ENCODE measurements at regions of chr12 and their contacts with region 1.

Region 1: GRCh38 chr12:109518820-109519665 is 41.6 kb downstream of the UBE3B start:
- DNase-seq: peak; percentile 18 to 58 (median 41)
- ATAC-seq: peak; percentile 77
- H3K4me3 ChIP-seq: no peak overlapping the region
- H3K4me3 Mint-ChIP-seq: no peak overlapping the region
- H3K27ac ChIP-seq: no peak overlapping the region
- H3K27ac Mint-ChIP-seq: peak overlapping the region in 4 of 9 donors; percentile 29 to 76 (median 45)
- H3K4me1 ChIP-seq: no peaks in the 10 kb centered on the region
- H3K4me1 Mint-ChIP-seq: peaks cover 0 to 12% (median 0%) of the 10 kb centered on the region in 7 donors
- H3K27me3 ChIP-seq: no peaks in the 10 kb centered on the region
- H3K27me3 Mint-ChIP-seq: no peaks in the 10 kb centered on the region

Region 2: DNA sequence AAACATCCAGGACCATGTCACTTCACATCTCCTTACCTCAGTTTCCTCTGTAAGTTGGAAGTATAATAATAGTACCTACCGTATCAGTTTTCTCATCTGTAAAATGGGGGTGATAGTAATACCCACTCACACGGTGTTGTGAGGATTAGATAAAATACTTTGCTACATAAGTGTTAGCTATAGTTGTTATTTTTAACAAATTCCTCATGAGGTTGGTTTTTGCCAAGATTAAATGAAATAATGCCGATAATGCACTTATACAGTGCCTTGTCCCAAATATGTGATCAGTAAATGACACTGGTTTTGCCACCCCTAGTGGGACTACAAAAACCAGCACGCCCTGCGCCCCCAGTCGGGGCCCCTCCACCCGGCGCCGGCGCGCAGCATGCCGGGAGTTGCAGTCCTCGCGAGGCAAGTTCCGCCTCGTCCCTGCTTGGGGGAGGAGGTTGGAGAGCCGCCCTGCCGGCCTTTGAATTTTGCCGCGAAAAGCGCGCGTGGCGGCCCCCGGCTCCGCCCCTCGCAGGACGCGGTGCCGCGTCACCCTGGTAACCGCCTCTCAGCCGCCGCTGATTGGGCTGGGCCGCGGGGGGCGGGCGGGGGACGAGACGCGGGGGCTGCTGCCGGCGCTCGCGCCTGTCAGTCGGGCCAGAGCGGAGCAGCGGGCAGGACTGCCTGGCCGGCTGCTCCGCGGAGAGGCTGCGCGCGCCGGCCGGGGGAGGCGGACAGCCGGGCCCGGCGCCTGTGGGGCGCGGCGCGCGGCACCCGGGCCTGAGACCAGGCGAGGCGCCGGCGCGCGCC is 194.3 kb after region 1 on chr12 and contains the start of gene FAM222A:
- CTCF ChIA-PET with region 1: no interaction called
- POLR2A ChIA-PET with region 1: no interaction called
- intact Hi-C with region 1: loop called in 1 of 2 experiments (anchors 1 kb)
- DNase-seq: peak; percentile 94 to 99 (median 98)
- ATAC-seq: peak; percentile 94
- H3K4me3 ChIP-seq: peak within 1 kb of the TSS; percentile 41
- H3K4me3 Mint-ChIP-seq: peak within 1 kb of the TSS; percentile 57 to 81 (median 72)
- H3K27ac ChIP-seq: peak within 1 kb of the TSS; percentile 55
- H3K27ac Mint-ChIP-seq: peak within 1 kb of the TSS in 1 of 9 donors; percentile 48
- H3K4me1 ChIP-seq: peaks cover 3 to 11% of the 10 kb centered on the region in 2 donors
- H3K4me1 Mint-ChIP-seq: peaks cover 0 to 4% (median 0%) of the 10 kb centered on the region in 7 donors
- H3K27me3 ChIP-seq: peaks cover 0 to 6% of the 10 kb centered on the region in 2 donors
- H3K27me3 Mint-ChIP-seq: peaks cover 29 to 65% (median 30%) of the 10 kb centered on the region in 5 donors
- total RNA-seq, gene FAM222A: 0.24 to 1.6 (median 0.80) TPM